Heart left ventricle (tissue), 16 donors: ENCODE measurements at regions of chr6 and their contacts with region 1.

Region 1: GRCh38 chr6:41735427-41736356 is at the start of gene TFEB:
- DNase-seq: peak; percentile 95 to 97 (median 96)
- ATAC-seq: peak; percentile 47 to 76 (median 68)
- H3K4me3 ChIP-seq: peak within 1 kb of the TSS; percentile 75 to 100 (median 96)
- H3K27ac ChIP-seq: peak within 1 kb of the TSS; percentile 98 to 100 (median 98)
- H3K4me1 ChIP-seq: peaks cover 10 to 40% (median 32%) of the 10 kb centered on the region in 12 donors
- H3K27me3 ChIP-seq: no peaks in the 10 kb centered on the region
- CTCF ChIP-seq: peak; percentile 82 to 100 (median 95)
- POLR2A ChIP-seq: peak; percentile 28 to 52
- total RNA-seq, gene TFEB: 26.2 to 47.2 (median 41.1) TPM

Region 2: GRCh38 chr6:41683510-41684310 is 52.0 kb before region 1 on chr6:
- intact Hi-C with region 1: loop called in 2 of 10 experiments (anchors 2 kb)
- DNase-seq: peak; percentile 80 to 91 (median 84)
- ATAC-seq: peak; percentile 59 to 82 (median 78)
- H3K4me3 ChIP-seq: peak overlapping the region; percentile 5 to 66 (median 55)
- H3K27ac ChIP-seq: peak overlapping the region; percentile 66 to 91 (median 82)
- H3K4me1 ChIP-seq: peaks cover 0 to 35% (median 20%) of the 10 kb centered on the region in 12 donors
- H3K27me3 ChIP-seq: no peaks in the 10 kb centered on the region
- CTCF ChIP-seq: peak; percentile 86 to 97 (median 93)
- POLR2A ChIP-seq: no peak

Region 3: DNA sequence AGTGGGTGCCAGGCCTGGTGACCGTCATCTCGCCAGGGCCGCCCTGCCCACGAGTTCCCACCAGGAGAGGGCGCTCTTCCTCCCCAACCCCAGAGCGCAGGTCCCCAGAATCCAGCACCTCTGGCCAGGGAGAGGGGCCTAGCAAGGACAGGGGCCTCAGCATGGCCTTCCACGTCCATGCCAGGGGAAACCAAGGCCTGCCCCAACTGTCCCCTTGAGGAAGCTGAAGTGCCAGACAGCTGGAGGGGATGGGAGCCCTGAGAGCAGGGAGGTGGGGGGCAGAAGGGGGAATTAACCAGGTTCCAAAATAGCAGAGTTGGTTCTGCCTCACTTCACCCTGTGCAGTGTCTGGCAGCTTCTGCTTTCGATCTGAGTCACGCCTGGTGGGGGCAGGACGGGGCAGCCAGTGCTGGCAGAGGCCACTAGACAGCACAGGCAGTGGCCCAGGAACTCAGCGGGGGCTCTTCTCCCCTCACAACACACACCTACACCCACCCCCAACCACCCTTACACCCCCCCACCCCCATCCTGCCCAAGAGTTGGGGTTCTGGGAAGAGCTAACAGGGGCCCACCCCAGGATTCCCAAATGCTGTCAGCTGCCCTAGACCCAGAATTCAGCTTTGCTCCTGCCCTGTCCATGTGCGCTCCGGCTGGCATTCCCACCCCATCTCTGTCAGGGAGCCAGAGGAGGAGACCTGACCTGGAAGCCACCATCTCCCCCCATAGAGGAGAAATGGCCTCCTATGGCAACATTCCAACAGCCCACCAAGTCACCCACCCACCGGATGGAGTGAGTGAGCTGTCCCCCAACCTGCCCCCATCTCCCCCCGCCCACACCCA is 29.5 kb before region 1 on chr6:
- intact Hi-C with region 1: loop called in 8 of 10 experiments (anchors 1 to 2 kb)
- DNase-seq: peak; percentile 86 to 92 (median 87)
- ATAC-seq: peak; percentile 89 to 91 (median 90)
- H3K4me3 ChIP-seq: peak overlapping the region in 2 of 12 donors; percentile 23 to 44
- H3K27ac ChIP-seq: peak overlapping the region; percentile 64 to 92 (median 82)
- H3K4me1 ChIP-seq: peaks cover 10 to 89% (median 61%) of the 10 kb centered on the region in 12 donors
- H3K27me3 ChIP-seq: no peaks in the 10 kb centered on the region
- CTCF ChIP-seq: peak; percentile 54 to 84 (median 72)
- POLR2A ChIP-seq: peak in 1 of 2 donors; percentile 10

Region 4: DNA sequence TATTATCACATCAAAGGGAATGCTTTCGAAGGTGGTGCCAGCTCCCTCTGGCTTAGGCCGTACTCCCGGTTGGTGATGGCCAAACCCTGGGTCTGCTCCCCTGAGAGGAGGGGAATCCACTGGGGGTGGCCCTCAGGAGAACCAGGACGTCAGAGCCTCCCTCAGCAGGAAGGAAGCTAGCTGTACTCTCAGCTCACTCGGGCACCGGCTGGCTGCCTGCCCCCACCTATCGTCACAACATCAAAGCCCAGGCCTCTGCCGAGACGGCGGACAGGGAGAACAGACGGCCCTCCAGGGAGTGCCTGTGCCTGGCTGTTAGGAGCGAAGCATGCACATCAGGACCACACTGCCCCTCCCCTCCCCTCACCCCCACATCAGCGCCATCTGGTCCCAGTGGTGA is 20.7 kb after region 1 on chr6:
- intact Hi-C with region 1: no loop called
- DNase-seq: peak in 1 of 5 donors; percentile 35
- ATAC-seq: no peak
- H3K4me3 ChIP-seq: no peak overlapping the region
- H3K27ac ChIP-seq: no peak overlapping the region
- H3K4me1 ChIP-seq: no peaks in the 10 kb centered on the region
- H3K27me3 ChIP-seq: no peaks in the 10 kb centered on the region
- CTCF ChIP-seq: no peak
- POLR2A ChIP-seq: no peak

Region 5: GRCh38 chr6:41767156-41767833 is 31.6 kb after region 1 on chr6:
- intact Hi-C with region 1: loop called in 1 of 10 experiments (anchors 5 kb)
- DNase-seq: peak in 4 of 5 donors; percentile 71 to 78 (median 72)
- ATAC-seq: peak; percentile 78 to 92 (median 88)
- H3K4me3 ChIP-seq: no peak overlapping the region
- H3K27ac ChIP-seq: peak overlapping the region in 11 of 12 donors; percentile 32 to 79 (median 61)
- H3K4me1 ChIP-seq: peaks cover 0 to 28% (median 19%) of the 10 kb centered on the region in 12 donors
- H3K27me3 ChIP-seq: no peaks in the 10 kb centered on the region
- CTCF ChIP-seq: no peak
- POLR2A ChIP-seq: no peak

Region 6: DNA sequence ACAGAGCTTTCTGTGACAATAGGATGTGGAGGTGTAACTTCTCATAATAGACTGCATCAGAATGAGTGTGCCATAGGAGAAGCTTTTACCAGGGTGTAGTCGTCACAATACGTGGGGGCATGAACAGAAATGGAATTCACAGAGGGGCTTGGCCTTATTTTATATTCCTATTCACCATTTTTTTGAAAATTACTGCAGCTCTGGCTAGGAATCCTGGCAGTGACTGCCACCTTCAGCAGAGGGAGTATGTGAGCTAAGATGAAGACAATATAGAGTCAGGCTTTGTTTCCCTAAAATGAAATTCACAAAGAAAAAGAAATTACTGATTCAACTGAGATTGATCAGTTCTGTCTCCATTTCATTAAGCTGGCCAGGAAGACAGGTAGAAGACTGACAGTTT is 65.7 kb after region 1 on chr6:
- intact Hi-C with region 1: no loop called
- DNase-seq: no peak
- ATAC-seq: no peak
- H3K4me3 ChIP-seq: no peak overlapping the region
- H3K27ac ChIP-seq: no peak overlapping the region
- H3K4me1 ChIP-seq: no peaks in the 10 kb centered on the region
- H3K27me3 ChIP-seq: no peaks in the 10 kb centered on the region
- CTCF ChIP-seq: peak in 11 of 12 donors; percentile 11 to 46 (median 26)
- POLR2A ChIP-seq: no peak